ENCODE measurements at regions of chr10 and their contacts with region 1.

Region 1: GRCh38 chr10:110535958-110536891 is 31.3 kb upstream of the SMC3 start:
- DNase-seq: peak; percentile 42
- H3K4me3 Mint-ChIP-seq: peak overlapping the region; percentile 27
- H3K27ac Mint-ChIP-seq: peak overlapping the region; percentile 92
- H3K4me1 Mint-ChIP-seq: peaks cover 55% of the 10 kb centered on the region
- H3K27me3 Mint-ChIP-seq: no peaks in the 10 kb centered on the region

Region 2: DNA sequence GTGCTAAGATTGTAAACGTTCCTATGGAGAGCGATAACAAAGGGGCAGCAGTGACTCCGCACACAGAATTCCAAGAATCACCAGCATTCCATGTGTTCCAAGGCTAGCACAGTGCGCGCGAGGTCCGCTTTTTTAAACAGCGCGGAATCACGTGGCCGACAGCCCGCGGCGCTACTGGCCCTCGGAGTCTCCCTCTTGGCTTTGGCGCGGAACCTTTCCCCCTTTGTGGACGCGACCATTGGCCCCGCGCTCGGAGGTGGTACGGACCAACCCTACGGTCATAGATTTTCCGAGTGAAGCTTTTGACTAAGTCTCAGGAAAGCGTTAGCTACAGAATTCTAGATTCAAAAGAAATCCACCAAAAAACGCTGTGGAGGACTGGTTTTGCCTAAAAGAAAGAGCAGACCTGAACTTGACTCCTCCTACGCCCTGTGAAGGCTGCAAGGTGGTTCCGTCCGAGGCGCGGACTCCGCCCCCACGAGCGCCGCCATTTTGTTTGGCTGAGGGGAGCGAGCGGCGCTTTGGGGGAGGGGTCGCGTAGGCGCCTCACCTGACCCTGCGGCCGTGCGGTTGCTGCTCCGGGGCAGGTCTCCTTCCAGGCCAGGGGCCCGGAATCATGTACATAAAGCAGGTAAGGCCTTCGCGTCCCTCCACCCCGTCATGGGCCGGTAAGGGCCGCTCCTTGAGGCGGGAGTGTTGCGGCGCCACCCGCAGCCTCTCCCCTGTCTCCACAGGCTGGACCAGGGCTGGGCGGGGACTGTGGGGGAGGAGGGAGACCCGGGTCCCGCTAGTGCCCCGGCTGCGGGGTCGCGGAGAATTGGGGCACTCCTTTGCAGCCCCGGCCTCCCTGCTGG is 31.2 kb after region 1 on chr10 and contains the start of gene SMC3:
- intact Hi-C with region 1: loop called (anchors 1 kb)
- DNase-seq: peak; percentile 90
- H3K4me3 Mint-ChIP-seq: peak within 1 kb of the TSS; percentile 90
- H3K27ac Mint-ChIP-seq: peak within 1 kb of the TSS; percentile 98
- H3K4me1 Mint-ChIP-seq: peaks cover 51% of the 10 kb centered on the region
- H3K27me3 Mint-ChIP-seq: peaks cover 9% of the 10 kb centered on the region
- total RNA-seq, gene SMC3: 78.4 and 78.8 TPM in 2 replicates

Region 3: GRCh38 chr10:111221682-111222480 is 685.7 kb after region 1 on chr10:
- intact Hi-C with region 1: no loop called
- DNase-seq: no peak
- H3K4me3 Mint-ChIP-seq: no peak overlapping the region
- H3K27ac Mint-ChIP-seq: no peak overlapping the region
- H3K4me1 Mint-ChIP-seq: no peaks in the 10 kb centered on the region
- H3K27me3 Mint-ChIP-seq: peaks cover 8% of the 10 kb centered on the region